HEK293 (cell line): ENCODE measurements at regions of chr14 and their contacts with region 1.

Region 1: DNA sequence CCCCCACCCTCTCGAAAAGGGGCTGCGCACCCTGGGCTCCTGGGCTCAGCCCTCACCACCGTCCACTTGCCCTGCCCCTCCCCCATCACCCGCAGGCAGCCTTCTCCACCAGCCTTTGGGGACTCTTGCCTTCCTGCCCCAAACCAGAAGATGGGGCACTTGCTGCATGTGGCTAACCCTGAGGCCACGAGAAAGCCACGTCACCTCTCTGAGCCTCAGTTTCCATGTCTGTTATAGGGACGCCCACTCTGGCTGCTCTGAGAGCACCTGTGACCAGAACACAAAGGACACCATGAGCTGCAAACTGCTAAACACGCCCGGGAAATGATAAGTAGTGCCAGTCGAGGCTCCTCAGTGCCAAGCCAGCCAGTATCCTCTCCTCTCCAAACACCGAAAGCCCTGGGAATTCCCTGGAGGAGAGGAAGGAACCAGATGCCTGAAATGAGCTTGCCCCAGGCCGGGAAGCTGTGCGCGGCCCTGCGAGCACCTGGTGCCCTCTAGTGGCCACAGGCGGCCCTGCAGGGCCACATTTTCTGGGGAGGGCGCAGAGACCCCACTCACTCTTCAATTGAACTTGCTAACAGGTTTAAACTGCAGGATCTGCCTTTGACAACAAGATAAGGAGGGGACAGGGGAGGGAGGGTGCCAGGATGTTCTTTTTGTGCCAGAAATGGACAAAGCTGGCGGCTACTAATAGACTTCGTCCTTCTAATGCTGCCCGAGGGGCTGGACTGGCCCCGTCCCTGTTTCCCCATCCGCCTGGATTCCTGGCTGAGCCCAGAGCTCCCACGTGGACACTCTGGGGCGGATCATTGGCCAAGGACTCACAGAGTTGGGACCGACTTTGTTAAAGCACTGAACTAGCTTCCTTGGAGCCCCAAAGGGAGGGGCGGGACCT is 10.2 kb upstream of the SERPINA9 start:
- H3K4me3 ChIP-seq: no peak overlapping the region
- H3K27ac ChIP-seq: no peak overlapping the region
- H3K4me1 ChIP-seq: no peaks in the 10 kb centered on the region
- CTCF ChIP-seq: peak; percentile 84

Region 2: DNA sequence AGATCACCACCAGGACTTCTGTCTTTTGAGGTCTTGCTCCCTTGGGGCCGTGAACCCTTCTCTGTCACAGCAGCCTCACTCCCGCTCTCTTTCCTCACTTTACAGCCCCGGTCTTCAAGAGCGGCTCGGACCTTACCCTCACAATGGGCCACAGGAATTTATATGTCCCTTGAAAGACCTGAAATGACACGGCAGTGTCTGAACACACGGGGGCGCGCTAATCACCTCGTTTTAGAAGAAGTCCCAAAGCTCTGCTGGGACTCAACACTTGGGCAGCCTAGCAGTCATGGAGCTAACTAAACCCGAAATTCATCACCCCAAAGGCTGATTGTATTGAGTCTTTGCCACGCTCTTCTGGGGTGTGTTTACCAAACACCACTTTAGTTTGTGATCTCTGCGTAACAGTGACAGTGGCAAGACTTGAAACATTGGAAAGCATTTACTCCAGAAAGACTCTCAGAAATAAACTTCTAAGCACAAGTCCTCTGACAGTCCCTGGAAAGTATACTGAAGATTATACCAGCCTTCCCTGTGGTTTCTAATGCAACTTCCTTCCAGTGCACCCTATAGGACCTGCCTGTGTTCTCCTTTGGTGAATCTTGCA is 62.6 kb before region 1 on chr14:
- CTCF ChIA-PET with region 1: interaction called, 29 read pairs
- POLR2A ChIA-PET with region 1: no interaction called
- H3K4me3 ChIP-seq: no peak overlapping the region
- H3K27ac ChIP-seq: no peak overlapping the region
- H3K4me1 ChIP-seq: no peaks in the 10 kb centered on the region
- CTCF ChIP-seq: peak; percentile 49; the same call in 1 of the 2 replicates

Region 3: GRCh38 chr14:94439453-94440057 is 46.6 kb before region 1 on chr14:
- CTCF ChIA-PET with region 1: interaction called, 48 read pairs
- POLR2A ChIA-PET with region 1: no interaction called
- H3K4me3 ChIP-seq: no peak overlapping the region
- H3K27ac ChIP-seq: no peak overlapping the region
- H3K4me1 ChIP-seq: no peaks in the 10 kb centered on the region
- CTCF ChIP-seq: no peak

Region 4: GRCh38 chr14:94474581-94475031 is 11.6 kb before region 1 on chr14:
- CTCF ChIA-PET with region 1: interaction called, 29 read pairs
- POLR2A ChIA-PET with region 1: no interaction called
- H3K4me3 ChIP-seq: no peak overlapping the region
- H3K27ac ChIP-seq: no peak overlapping the region
- H3K4me1 ChIP-seq: no peaks in the 10 kb centered on the region
- CTCF ChIP-seq: no peak

Region 5: DNA sequence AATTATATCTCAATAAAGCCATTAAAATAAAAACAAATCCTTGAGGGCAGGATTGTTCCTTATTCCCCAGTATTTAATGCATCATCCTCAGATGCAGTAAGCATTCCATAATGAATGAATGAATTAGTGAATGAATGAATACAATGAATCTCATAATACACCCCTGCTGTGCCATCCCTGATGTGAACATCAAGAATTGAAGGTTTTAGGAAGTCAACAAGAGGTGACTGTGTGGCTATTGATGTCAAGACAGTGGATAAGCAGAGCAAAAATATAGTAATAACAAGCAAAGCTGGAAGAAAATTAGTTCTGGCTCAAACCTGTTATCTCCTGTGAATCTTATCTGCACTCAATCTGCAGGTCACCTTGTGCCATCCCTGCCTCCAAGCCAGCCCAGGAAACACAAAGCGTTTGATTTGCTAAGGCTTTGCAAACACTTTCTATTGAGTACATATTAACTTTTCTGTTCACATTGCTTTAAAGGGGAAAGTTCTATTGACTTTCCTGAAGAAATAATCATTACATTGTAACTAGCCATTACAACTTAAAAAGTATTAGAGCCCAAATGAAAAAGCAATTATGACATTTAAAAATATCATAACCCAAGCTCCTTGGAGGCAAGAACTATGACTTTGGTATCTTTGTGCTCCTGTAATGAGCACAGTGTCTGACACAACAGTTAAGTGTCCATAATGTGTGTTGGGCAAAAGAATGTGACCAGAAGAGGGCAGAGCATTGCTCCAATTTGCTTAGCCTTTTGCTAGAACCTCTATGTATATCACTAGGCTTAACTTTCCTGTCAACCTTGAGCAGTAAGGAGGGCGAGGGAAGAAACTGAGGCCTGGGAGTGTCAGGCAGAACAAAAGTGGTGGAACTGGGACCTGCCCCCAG is 150.6 kb after region 1 on chr14:
- CTCF ChIA-PET with region 1: no interaction called
- POLR2A ChIA-PET with region 1: no interaction called
- H3K4me3 ChIP-seq: no peak overlapping the region
- H3K27ac ChIP-seq: no peak overlapping the region
- H3K4me1 ChIP-seq: no peaks in the 10 kb centered on the region
- CTCF ChIP-seq: no peak